Uterus (tissue), 4 donors: ENCODE measurements at regions of chr11 and their contacts with region 1.

Region 1: DNA sequence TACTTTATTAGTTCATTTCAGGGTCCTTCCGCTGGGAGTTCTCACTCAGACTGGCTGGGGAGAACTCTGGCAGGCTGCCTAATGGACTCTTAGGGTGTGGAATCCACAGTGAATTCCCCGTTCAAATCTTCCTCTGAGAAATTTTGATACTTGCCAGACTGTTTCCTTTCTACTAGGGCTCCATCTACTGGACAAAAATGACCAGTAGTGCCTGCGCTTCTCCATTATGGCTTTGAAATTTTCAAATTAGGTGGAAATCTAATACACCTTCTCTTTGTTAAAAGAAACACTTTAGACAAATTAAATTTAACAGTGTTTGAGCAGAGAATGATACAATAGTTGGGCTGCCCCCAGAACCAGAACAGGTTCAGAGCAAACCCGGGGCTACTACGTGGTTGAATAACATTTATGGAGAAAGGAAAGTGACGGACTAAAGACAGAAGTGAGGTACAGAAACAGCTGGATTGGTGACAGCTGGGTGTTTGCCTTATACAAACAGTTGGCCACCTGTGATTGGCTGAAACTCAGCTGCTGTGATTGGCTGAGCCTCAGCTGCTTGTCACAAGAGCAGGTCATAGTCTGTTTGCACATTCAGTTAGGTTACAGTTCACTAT is 52.9 kb upstream of the FDX1 start:
- DNase-seq: peak; percentile 64 to 79
- H3K4me3 ChIP-seq: no peak overlapping the region
- H3K27ac ChIP-seq: peak overlapping the region in 1 of 2 donors; percentile 15
- H3K4me1 ChIP-seq: no peaks in the 10 kb centered on the region
- H3K27me3 ChIP-seq: no peaks in the 10 kb centered on the region
- CTCF ChIP-seq: peak; percentile 65 to 85 (median 72)
- POLR2A ChIP-seq: no peak

Region 2: DNA sequence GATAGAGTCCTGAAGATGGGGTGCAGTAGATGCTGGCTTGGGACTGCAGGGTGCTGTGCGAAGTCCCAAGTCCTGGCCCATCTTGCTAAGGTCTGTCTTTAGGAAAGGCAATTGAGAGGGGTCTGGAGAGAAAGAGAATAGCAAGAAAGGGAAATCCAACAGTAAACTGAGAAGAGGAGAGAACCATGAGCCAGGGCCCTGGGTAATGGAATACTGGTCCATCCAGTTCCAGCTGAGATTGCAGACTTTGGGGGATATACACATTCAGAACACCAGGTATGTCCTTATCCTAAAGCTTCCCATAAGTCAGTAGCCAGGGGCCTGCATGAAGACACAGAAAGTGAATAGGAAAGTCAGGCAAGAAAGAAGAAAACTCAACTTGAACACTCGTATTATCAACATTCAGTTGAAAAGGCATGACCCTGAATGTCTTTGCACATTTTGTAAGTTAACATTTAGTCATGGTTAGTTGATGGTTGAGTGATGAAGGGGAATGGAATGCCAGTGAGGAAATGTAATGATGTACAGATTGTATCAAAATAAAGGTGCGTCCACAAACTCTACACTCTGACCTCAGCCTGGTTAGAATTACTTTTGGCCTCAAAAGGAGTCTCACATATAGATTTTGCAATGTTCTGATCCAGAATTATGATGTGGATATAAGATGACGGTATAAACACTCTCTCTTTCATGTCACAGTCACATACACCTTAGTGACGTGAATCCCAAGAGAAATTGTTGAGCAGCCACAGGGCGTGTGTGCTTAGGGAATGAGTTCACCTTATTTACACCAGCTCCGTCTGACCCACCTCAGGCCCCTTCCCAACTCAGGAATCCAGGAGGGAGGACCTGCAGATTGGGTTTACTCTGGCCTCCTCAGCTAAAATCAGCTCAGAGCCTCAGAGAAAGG is 180.7 kb before region 1 on chr11:
- intact Hi-C with region 1: loop called (anchors 5 kb)
- DNase-seq: no peak
- H3K4me3 ChIP-seq: no peak overlapping the region
- H3K27ac ChIP-seq: no peak overlapping the region
- H3K4me1 ChIP-seq: no peaks in the 10 kb centered on the region
- H3K27me3 ChIP-seq: no peaks in the 10 kb centered on the region
- CTCF ChIP-seq: no peak
- POLR2A ChIP-seq: no peak

Region 3: DNA sequence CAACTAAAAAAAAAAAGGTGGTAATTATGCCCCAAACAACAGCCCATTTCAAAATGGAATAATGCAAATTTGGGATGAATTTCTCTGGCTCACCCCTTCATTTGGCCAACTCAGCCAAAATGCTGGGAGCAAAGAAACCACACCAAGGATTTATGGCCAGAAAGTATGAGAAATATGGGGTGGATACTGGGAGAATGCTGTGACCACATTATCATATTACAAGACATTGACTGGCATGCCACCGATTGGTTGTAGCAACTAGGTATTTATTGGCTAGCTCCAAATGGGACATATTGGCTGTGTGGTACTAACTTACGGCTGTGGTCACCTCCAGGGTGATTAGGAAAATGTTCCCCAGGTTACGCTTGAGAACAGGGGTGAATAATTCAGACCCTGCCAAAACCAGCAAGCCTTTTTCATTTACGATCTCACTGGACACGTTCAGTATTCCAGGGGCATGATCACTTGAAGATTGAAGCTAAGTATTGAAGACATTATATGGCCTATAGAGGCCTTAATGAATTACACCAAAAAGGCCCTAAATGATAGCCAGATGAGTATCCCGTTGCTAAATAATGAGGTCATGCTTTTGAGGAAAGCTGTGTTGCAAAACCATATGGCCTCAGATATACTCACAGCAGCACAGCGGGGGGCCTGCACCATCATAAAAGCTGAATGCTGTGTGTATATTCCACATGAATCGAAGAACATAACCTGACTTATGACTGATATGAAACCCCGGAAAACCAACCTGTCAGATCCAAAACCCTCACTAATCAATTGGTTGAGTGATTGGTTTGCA is 49.1 kb after region 1 on chr11:
- intact Hi-C with region 1: no loop called
- DNase-seq: no peak
- H3K4me3 ChIP-seq: no peak overlapping the region
- H3K27ac ChIP-seq: no peak overlapping the region
- H3K4me1 ChIP-seq: no peaks in the 10 kb centered on the region
- H3K27me3 ChIP-seq: no peaks in the 10 kb centered on the region
- CTCF ChIP-seq: no peak
- POLR2A ChIP-seq: no peak